Caco-2 (cell line): ENCODE measurements at regions of chr20 and their contacts with region 1.

Region 1: GRCh38 chr20:37534401-37535157 is 6.9 kb upstream of the BLCAP start:
- DNase-seq: peak; percentile 76 to 87
- H3K4me3 ChIP-seq: no peak overlapping the region
- H3K4me3 Mint-ChIP-seq: no peak overlapping the region
- H3K27ac Mint-ChIP-seq: no peak overlapping the region
- H3K4me1 ChIP-seq: peaks cover 11% of the 10 kb centered on the region
- H3K4me1 Mint-ChIP-seq: peaks cover 25% of the 10 kb centered on the region
- H3K27me3 ChIP-seq: no peaks in the 10 kb centered on the region
- H3K27me3 Mint-ChIP-seq: no peaks in the 10 kb centered on the region
- CTCF ChIP-seq: peak; percentile 96 to 97

Region 2: GRCh38 chr20:37192137-37192854 is 342.3 kb before region 1 on chr20:
- CTCF ChIA-PET with region 1: interaction called, 11 read pairs
- POLR2A ChIA-PET with region 1: no interaction called
- intact Hi-C with region 1: loop called (anchors 1 kb)
- DNase-seq: peak; percentile 87 to 91
- H3K4me3 ChIP-seq: no peak overlapping the region
- H3K4me3 Mint-ChIP-seq: no peak overlapping the region
- H3K27ac Mint-ChIP-seq: peak overlapping the region; percentile 16
- H3K4me1 ChIP-seq: no peaks in the 10 kb centered on the region
- H3K4me1 Mint-ChIP-seq: peaks cover 38% of the 10 kb centered on the region
- H3K27me3 ChIP-seq: no peaks in the 10 kb centered on the region
- H3K27me3 Mint-ChIP-seq: no peaks in the 10 kb centered on the region
- CTCF ChIP-seq: peak; percentile 98 to 99

Region 3: DNA sequence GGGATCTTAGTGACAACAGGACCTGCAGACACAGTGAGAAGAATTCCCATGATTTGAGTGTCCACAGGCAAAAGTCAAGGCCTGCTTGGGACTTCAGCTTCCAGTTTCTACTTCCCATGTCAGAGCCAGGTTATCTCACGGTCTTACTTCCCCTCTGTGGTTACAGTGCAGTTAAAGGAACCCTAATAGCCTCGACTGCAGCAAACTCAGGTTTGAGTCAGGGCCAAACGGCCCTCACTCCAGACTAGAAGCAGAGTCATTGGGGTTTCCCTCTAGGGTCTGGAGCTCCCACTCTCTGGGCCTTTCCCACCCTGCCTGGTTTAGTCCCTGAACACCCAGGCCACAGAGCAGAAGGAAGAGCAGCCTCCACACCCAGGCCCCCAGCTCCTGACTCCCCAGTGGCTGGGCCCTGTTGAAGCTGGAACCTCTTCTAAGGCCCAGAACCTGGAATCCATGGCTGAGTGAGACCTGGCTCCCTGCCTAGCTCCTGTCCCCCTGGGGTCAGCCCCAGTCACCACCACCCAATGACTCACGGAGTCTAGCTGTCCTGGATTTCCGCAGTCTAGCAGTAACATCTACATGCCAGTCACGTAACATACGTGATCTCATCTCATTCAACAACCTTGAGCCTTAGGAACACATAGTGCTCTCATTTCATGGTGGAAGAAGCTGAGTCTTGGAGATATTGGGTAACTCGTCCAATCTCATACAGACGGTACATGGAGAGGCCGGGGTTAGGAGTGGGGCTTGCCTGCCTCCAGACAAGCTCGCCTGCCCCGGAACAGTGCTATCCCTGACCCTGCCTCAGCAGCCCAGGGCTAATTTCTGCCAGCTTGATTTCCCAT is 263.8 kb before region 1 on chr20:
- CTCF ChIA-PET with region 1: no interaction called
- POLR2A ChIA-PET with region 1: no interaction called
- intact Hi-C with region 1: loop called (anchors 1 kb)
- DNase-seq: no peak
- H3K4me3 ChIP-seq: no peak overlapping the region
- H3K4me3 Mint-ChIP-seq: no peak overlapping the region
- H3K27ac Mint-ChIP-seq: no peak overlapping the region
- H3K4me1 ChIP-seq: no peaks in the 10 kb centered on the region
- H3K4me1 Mint-ChIP-seq: no peaks in the 10 kb centered on the region
- H3K27me3 ChIP-seq: no peaks in the 10 kb centered on the region
- H3K27me3 Mint-ChIP-seq: no peaks in the 10 kb centered on the region
- CTCF ChIP-seq: no peak

Region 4: DNA sequence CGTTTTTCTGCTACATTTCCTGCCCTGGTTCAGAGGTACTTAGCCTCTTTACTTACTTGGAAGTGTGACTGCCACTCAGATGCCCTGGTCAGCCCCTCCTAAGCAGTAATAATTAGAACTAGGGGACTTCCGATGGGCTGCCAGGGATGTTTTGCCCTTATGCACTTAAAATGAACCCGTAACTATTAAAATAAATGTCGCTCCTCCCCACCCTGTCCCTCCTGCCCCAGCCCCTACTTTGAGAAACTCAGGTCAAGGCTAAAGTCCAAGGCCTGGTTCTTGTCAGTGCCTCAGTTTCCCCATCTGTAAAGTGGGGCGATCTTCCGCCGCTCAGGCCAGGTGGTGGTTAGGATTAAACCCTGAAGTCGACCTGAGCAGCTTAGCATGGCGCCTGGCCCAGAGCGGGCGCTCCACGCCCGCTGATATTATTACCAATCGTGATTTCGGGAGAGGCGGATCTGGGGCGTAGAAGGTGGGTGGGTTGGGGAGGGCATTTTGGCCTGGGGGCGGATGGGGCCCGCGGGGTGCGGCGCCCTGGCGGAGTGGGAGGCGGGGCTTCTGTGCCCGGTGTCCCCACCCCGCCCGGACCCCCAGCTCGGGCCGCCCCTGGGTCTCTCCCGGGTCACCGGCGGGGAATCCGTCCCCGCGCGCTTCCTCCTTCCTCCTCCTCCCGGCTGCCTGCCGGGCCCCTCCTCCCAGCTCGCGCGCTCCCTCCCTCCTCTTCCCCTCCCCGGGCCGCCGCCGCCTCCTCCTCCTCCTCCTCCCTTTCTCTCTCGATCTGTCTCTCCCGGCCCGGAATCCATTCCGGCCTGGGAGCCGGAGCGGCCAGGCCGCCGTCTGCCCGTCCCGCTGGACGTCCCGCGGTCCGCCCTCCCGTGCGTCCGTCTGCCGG is 189.0 kb before region 1 on chr20 and contains the start of gene SRC:
- CTCF ChIA-PET with region 1: no interaction called
- POLR2A ChIA-PET with region 1: no interaction called
- intact Hi-C with region 1: loop called (anchors 2 kb)
- DNase-seq: peak in 1 of 2 experiments; percentile 73
- H3K4me3 ChIP-seq: peak within 1 kb of the TSS; percentile 46
- H3K4me3 Mint-ChIP-seq: peak within 1 kb of the TSS; percentile 90
- H3K27ac Mint-ChIP-seq: peak within 1 kb of the TSS; percentile 98
- H3K4me1 ChIP-seq: peaks cover 50% of the 10 kb centered on the region
- H3K4me1 Mint-ChIP-seq: peaks cover 41% of the 10 kb centered on the region
- H3K27me3 ChIP-seq: no peaks in the 10 kb centered on the region
- H3K27me3 Mint-ChIP-seq: no peaks in the 10 kb centered on the region
- CTCF ChIP-seq: no peak
- total RNA-seq, gene SRC: 197 and 222 TPM in 2 replicates

Region 5: DNA sequence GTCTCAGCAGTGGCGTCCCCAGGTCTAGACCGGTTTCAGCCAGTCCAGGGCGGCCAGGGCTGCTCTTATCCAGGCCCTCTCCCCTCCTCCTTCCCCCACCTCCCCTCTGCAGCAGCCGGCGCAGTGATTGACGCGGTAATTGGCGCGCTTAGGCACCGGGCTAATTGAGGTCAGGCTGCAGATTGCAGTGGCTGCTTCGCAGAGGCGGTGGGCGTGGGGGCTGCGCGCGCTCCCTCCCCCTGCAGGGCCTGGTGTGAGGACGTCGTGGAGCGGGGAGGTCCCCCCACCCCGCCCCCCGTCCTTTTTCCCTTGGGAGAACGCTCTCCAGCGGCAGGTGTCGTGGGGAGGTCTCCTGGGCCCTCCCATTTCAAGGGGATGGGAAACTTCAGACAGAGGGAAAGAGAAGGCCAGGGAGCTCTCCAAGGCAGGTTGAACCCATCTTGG is 63.5 kb after region 1 on chr20:
- CTCF ChIA-PET with region 1: no interaction called
- POLR2A ChIA-PET with region 1: no interaction called
- intact Hi-C with region 1: loop called (anchors 10 kb)
- DNase-seq: no peak
- H3K4me3 ChIP-seq: no peak overlapping the region
- H3K4me3 Mint-ChIP-seq: no peak overlapping the region
- H3K27ac Mint-ChIP-seq: no peak overlapping the region
- H3K4me1 ChIP-seq: no peaks in the 10 kb centered on the region
- H3K4me1 Mint-ChIP-seq: no peaks in the 10 kb centered on the region
- H3K27me3 ChIP-seq: no peaks in the 10 kb centered on the region; the same call in 1 of the 2 replicates
- H3K27me3 Mint-ChIP-seq: peaks cover 18% of the 10 kb centered on the region
- CTCF ChIP-seq: no peak